ENCODE measurements at regions of chr6 and their contacts with region 1.

Region 1: DNA sequence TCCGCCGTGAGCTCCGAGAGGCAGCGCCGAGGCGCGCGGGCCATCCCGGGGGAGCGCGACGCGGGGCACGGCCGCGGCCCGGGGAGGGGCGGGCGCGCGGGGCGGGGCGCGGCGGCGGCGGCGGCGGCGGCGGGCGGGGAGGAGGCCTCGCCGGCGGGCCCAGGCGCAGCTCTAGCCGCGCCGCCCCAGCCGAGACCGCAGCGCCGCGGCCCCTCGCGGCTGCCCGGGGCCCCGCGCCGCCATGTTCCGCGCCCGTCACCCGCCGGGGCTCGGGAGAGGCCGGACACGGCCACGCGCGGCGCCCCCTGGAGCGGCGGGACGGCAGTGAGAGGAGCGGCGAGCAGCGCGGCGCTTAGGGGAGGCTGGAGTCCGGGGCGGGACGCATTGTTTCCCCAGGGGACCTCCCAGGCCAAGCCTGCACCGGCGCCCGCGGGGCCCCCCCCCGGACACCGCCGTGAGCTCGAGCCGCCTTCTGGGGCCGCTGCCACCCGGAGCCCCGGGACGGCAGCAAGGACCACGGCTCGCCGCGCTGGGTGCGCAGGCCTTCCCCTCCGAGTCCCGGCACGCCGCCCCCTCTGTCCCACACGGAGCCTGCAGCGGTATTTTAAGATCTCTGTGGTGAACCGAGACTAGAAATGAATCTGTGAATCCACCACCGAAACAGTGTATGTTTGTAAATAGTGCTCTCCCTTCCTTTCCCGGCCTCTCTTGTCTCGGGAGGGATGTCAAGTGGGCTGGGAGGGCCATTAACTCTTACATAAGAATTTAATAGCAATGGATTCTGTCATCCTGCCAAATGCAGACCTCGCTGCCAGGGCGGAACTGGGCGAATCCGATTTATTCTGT is at the start of gene KIF13A:
- DNase-seq: peak; percentile 77
- H3K4me3 ChIP-seq: peak within 1 kb of the TSS; percentile 53
- H3K27ac ChIP-seq: peak within 1 kb of the TSS; percentile 95
- H3K4me1 ChIP-seq: peaks cover 6% of the 10 kb centered on the region
- H3K27me3 ChIP-seq: no peaks in the 10 kb centered on the region
- CTCF ChIP-seq: no peak
- total RNA-seq, gene KIF13A: 43.7 to 54.0 TPM

Region 2: DNA sequence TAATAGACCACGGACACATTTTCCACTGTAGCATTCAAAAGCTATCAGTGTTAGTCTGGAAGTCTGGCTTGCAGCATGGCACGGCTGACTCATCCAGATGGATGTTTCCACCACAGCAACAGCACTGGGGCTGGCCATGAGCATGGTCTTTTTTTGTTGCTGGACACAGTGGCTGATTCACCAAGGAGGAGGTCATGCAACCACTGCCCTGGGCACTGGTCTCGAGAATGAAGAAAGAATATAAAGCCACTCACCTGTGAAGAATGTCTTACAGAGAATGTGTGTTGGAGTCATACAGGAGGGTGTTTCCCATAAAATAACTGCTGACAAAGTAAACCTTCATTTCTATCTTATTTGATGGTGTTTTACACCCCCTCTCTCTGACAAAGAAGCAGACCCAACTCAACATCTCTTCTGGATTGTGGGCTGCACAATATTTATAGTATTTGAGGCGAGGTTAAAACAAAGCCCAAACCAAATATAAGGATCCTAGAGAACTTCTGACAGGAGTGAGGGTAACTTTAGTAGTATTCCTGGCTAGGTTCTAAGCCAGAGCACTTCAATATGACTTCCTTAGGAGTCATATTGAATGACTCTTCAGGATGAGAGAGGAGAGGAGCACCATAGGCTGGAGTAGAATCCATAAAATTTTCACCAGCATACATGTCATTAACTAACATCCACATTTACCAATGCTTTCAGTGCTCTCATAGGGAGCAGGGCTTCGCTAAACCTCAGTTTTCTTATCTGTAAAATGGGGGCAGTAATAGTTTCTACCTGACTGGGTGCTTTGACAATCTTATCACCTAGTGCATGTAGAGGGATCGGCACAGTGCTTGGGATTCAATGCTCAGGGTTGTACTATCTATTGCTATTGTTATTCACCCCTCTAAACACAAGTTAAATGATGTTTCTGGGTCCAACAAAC is 121.7 kb before region 1 on chr6:
- intact Hi-C with region 1: loop called (anchors 10 kb)
- DNase-seq: peak; percentile 44
- H3K4me3 ChIP-seq: no peak overlapping the region
- H3K27ac ChIP-seq: peak overlapping the region; percentile 21
- H3K4me1 ChIP-seq: no peaks in the 10 kb centered on the region
- H3K27me3 ChIP-seq: no peaks in the 10 kb centered on the region
- CTCF ChIP-seq: no peak

Region 3: GRCh38 chr6:18122124-18123093 is 134.6 kb after region 1 on chr6 and contains the start of gene NHLRC1:
- intact Hi-C with region 1: loop called (anchors 5 kb)
- DNase-seq: peak; percentile 91
- H3K4me3 ChIP-seq: peak within 1 kb of the TSS; percentile 50
- H3K27ac ChIP-seq: no peak within 1 kb of the TSS
- H3K4me1 ChIP-seq: peaks cover 13% of the 10 kb centered on the region
- H3K27me3 ChIP-seq: no peaks in the 10 kb centered on the region
- CTCF ChIP-seq: peak; percentile 91
- total RNA-seq, gene NHLRC1: 1.6 to 2.5 TPM